Panc1 (cell line): ENCODE measurements at regions of chr13 and their contacts with region 1.

Region 1: DNA sequence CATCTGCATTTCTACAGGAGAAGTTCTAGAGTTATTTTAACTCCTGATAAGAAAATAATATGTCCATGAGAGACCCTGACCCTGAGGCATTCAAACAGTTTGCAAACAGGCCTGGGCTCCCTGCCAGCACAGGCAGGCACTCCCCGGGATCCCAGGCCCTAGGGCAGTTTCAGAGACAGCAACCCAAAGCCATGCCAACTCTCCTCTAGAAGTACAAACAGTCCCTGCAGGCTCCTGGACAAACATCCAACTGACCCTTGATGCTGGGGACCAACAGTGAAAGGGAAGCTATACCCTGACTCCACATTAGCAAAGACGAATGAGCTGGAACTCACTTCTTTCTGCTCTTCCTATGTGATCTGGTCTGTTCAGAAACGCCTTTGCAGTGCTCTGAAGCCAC is 44.8 kb downstream of the CCDC70 start:
- DNase-seq: no peak
- ATAC-seq: peak; percentile 74; the same call in 1 of the 2 replicates
- H3K4me3 ChIP-seq: no peak overlapping the region
- H3K27ac ChIP-seq: no peak overlapping the region
- H3K4me1 ChIP-seq: no peaks in the 10 kb centered on the region; the same call in 1 of the 2 replicates
- H3K27me3 ChIP-seq: no peaks in the 10 kb centered on the region
- CTCF ChIP-seq: no peak

Region 2: GRCh38 chr13:51729866-51730546 is 176.6 kb before region 1 on chr13:
- CTCF ChIA-PET with region 1: no interaction called
- POLR2A ChIA-PET with region 1: no interaction called
- in situ Hi-C with region 1: no loop called
- intact Hi-C with region 1: no loop called
- DNase-seq: no peak
- ATAC-seq: 0 out of 2 replicates have a peak, but pooled peaks have one; percentile 38
- H3K4me3 ChIP-seq: no peak overlapping the region
- H3K27ac ChIP-seq: no peak overlapping the region
- H3K4me1 ChIP-seq: 0 out of 2 replicates have a peak, but pooled peaks cover 4% of the 10 kb centered on the region
- H3K27me3 ChIP-seq: no peaks in the 10 kb centered on the region
- CTCF ChIP-seq: no peak

Region 3: DNA sequence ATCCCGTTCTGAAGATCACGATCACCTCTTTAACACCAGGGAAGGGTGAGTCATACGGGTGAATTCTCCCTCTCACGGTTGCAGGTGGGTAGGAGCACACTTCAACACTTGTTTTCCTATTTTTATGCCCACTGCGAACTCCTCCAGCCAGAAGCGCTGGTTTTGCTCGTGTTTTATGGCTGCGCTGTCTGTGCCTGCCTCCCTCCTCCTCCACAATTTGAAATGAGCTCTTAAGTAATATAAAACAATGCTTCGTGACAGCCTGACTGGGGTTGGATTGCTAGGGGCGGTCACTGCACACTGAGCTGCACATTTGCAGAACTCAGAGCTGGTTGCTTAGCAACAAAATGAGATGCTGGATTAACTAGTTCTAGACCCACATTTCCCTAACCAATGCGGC is 31.9 kb before region 1 on chr13:
- CTCF ChIA-PET with region 1: no interaction called
- POLR2A ChIA-PET with region 1: no interaction called
- in situ Hi-C with region 1: no loop called
- intact Hi-C with region 1: no loop called
- DNase-seq: no peak
- ATAC-seq: no peak
- H3K4me3 ChIP-seq: no peak overlapping the region
- H3K27ac ChIP-seq: no peak overlapping the region
- H3K4me1 ChIP-seq: no peaks in the 10 kb centered on the region
- H3K27me3 ChIP-seq: no peaks in the 10 kb centered on the region
- CTCF ChIP-seq: no peak

Region 4: GRCh38 chr13:51995677-51996551 is 89.3 kb after region 1 on chr13:
- CTCF ChIA-PET with region 1: no interaction called
- POLR2A ChIA-PET with region 1: no interaction called
- in situ Hi-C with region 1: no loop called
- intact Hi-C with region 1: loop called (anchors 10 kb)
- DNase-seq: no peak
- ATAC-seq: peak; percentile 72
- H3K4me3 ChIP-seq: peak overlapping the region; percentile 11 to 26; a peak in 3 of 4 replicates
- H3K27ac ChIP-seq: peak overlapping the region; percentile 85
- H3K4me1 ChIP-seq: peaks cover 68% of the 10 kb centered on the region
- H3K27me3 ChIP-seq: no peaks in the 10 kb centered on the region
- CTCF ChIP-seq: peak; percentile 10; the same call in 1 of the 2 replicates

Region 5: GRCh38 chr13:52348983-52349780 is 442.6 kb after region 1 on chr13:
- CTCF ChIA-PET with region 1: no interaction called
- POLR2A ChIA-PET with region 1: no interaction called
- in situ Hi-C with region 1: no loop called
- intact Hi-C with region 1: no loop called
- DNase-seq: peak; percentile 15
- ATAC-seq: peak; percentile 73; the same call in 1 of the 2 replicates
- H3K4me3 ChIP-seq: no peak overlapping the region
- H3K27ac ChIP-seq: peak overlapping the region; percentile 36
- H3K4me1 ChIP-seq: peaks cover 5% of the 10 kb centered on the region
- H3K27me3 ChIP-seq: no peaks in the 10 kb centered on the region
- CTCF ChIP-seq: no peak